Calu3 (cell line): ENCODE measurements at regions of chr20 and their contacts with region 1.

Region 1: DNA sequence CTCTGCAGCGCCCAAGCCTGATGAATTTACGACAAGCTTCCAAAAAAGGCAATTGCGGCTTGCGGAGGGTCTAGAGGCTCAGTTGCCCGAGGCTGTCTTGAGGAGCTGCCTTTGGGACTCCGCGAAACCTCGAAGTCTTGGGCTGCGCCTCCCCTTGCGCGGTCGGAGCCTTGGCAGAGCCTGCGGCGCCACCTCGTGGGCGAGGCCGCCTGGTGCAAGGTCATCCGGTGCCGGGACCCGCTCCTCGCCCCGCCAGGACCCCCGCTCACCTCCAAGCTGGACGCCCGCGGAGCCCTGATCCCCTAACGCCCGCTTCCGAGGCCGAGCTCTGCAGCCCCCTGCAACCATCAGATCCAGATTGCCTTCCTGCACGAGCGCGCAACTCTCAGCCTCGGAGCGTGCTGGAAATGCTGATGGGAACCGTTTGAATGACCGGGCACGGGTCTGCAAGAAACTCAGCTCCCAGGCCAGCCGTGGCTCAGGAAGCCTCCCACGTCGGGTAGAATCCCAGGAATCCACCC is 14.9 kb upstream of the FAM210B start:
- DNase-seq: peak; percentile 73
- H3K4me3 Mint-ChIP-seq: peak overlapping the region; percentile 43
- H3K27ac Mint-ChIP-seq: no peak overlapping the region
- H3K4me1 Mint-ChIP-seq: peaks cover 12% of the 10 kb centered on the region
- H3K27me3 Mint-ChIP-seq: peaks cover 73% of the 10 kb centered on the region
- CTCF ChIP-seq: peak; percentile 72

Region 2: GRCh38 chr20:54668271-54669039 is 1675.5 kb before region 1 on chr20:
- CTCF ChIA-PET with region 1: no interaction called
- intact Hi-C with region 1: loop called (anchors 10 kb)
- DNase-seq: peak; percentile 75
- H3K4me3 Mint-ChIP-seq: peak overlapping the region; percentile 37
- H3K27ac Mint-ChIP-seq: no peak overlapping the region
- H3K4me1 Mint-ChIP-seq: peaks cover 13% of the 10 kb centered on the region
- H3K27me3 Mint-ChIP-seq: peaks cover 87% of the 10 kb centered on the region
- CTCF ChIP-seq: peak; percentile 85

Region 3: DNA sequence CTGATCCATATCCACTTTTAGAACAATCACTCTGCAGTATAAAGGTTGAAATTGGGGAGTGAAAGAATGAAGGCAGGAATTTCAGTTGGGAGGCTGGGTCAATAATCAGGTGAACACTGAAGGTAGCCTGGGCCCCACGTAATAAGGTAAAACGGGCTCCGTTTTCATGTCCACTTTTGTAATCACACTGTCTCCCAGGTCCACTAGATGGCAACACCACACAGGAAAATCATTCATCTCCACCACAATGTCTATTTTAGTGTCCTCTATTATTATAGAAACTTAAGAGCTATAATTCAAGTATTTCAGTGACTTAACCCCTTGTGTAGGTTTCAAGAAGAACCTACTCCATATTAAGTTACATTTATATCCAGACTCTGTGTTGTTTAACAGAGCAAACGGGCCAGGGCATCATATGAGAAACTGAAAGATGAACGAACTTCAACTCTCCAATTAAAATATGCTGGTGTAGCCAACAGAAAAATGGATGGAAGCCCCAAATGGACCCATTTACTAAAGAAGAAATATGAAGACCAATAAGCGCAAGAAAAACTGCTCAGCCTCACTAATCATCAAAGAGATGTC is 141.3 kb before region 1 on chr20:
- CTCF ChIA-PET with region 1: no interaction called
- intact Hi-C with region 1: loop called (anchors 1 kb)
- DNase-seq: peak; percentile 13
- H3K4me3 Mint-ChIP-seq: no peak overlapping the region
- H3K27ac Mint-ChIP-seq: no peak overlapping the region
- H3K4me1 Mint-ChIP-seq: no peaks in the 10 kb centered on the region
- H3K27me3 Mint-ChIP-seq: no peaks in the 10 kb centered on the region
- CTCF ChIP-seq: no peak

Region 4: DNA sequence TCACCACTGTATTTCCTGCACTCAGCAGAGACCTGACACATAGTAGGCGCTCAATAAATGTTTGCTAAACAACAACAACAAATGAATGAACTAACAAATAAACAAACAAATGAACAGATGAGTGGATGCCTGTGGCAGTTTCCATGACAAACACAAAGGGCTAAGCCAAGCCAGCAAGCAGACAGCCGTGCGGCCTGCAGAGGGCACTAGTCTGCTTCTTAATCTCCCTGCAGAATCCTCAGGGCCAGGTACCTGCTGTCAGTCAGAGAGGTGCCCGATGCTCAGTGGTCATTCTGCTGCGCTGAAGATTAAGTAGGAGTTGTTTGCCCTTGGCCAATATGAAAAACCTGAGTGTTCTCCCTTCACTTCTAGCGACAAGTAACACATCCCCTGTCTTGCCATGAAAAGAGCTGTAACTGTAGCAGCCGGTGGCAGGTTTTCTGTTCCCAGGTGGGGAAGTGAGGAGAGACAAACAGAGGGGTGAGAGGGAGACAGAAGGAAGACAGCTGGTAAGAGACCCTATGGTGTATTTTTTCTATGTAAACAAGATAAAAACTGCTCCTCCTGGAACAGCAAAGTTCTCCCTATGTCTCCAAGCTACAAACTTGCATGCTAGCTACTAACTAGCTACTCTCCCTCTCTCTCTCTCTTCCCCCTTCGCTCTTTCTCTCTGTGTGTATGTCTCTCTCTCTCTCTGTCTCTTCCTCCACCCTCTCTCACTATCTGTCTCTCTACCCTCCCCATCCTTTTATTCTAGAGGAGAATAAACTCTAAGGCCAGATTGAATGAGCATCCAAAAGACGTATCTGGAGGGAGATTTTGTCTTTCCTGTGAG is 95.8 kb before region 1 on chr20 and contains the start of gene MC3R:
- CTCF ChIA-PET with region 1: interaction called, 3 read pairs
- intact Hi-C with region 1: loop called (anchors 2 kb)
- DNase-seq: peak; percentile 68
- H3K4me3 Mint-ChIP-seq: no peak within 1 kb of the TSS
- H3K27ac Mint-ChIP-seq: no peak within 1 kb of the TSS
- H3K4me1 Mint-ChIP-seq: no peaks in the 10 kb centered on the region
- H3K27me3 Mint-ChIP-seq: peaks cover 47% of the 10 kb centered on the region
- CTCF ChIP-seq: peak; percentile 60
- total RNA-seq, gene MC3R: not detected in 2 replicates